ENCODE measurements at regions of chr10 and their contacts with region 1.

Region 1: DNA sequence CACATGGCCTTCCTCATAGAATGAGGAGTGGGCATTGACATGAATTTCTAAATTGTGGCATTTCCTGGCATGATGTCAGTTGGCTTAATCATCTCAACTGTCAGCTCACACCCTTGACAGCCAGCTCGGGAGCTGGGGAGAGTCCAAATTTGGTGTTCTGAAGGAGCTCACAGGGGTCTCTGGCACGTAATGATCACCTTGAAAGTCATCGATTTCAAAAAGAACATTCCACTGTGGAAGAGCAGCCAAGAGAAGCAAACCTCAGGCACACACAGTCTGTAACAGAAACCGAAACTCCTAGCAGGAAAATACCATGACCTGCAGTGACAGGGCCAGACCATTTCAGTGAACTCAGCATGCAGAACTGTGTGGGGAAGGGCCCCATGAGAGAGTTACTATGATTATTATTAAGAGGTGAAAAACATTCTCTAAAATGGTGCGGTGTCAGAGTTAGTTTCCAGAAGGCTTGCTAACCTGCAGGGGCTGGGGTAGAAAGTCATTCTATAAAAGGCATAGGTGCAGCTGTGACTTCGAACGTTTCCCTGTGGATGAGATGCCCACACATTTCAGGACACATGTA is 26.4 kb upstream of the KLF6 start:
- DNase-seq: peak; percentile 49 to 79 (median 66)
- H3K4me3 ChIP-seq: peak overlapping the region; percentile 1 to 39
- H3K4me3 Mint-ChIP-seq: peak overlapping the region; percentile 76 to 87 (median 82)
- H3K27ac ChIP-seq: peak overlapping the region; percentile 99
- H3K27ac Mint-ChIP-seq: no peak overlapping the region
- H3K4me1 ChIP-seq: peaks cover 79% of the 10 kb centered on the region
- H3K4me1 Mint-ChIP-seq: peaks cover 18 to 89% (median 66%) of the 10 kb centered on the region in 4 donors
- H3K27me3 ChIP-seq: no peaks in the 10 kb centered on the region
- H3K27me3 Mint-ChIP-seq: no peaks in the 10 kb centered on the region

Region 2: DNA sequence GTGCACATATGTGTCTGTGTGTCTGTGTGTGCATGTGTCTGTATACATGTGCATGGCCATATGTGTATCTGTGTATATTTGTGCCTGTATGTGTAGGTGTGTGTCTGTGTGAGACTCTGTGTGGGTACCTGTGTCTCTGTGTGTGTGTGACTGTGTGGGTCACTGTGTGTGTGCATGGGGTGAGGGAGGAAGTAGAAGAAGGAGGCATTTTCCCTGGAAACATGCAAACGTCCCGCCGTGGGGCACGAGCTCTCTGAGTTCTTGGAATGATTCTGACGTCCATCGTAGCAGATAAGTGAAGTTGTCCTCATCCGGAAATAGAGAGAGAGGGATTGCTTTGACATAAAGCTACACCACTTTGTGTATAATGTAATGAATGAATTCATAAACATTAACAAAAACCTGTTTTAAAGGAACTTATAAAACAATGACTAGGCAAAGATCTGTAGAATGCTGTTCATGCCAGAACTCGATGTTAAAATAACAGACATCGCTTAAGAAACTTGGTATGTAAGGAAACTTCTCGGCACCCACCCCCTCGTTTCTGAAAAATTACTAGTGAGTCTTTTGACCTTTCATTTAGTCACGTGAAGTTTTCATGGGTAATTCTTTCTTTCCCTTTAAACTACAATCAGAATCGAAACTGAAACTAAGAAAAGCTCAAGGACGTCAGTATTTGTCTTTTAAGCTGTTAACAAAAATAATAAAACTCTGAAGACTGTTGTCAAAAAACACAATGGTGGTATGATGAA is 17.2 kb after region 1 on chr10:
- CTCF ChIA-PET with region 1: interaction called, 7 read pairs
- POLR2A ChIA-PET with region 1: interaction called, 304 read pairs
- intact Hi-C with region 1: loop called (anchors 2 kb)
- DNase-seq: peak; percentile 53 to 70 (median 62)
- H3K4me3 ChIP-seq: peak overlapping the region; percentile 32 to 55
- H3K4me3 Mint-ChIP-seq: peak overlapping the region; percentile 85 to 91 (median 88)
- H3K27ac ChIP-seq: peak overlapping the region; percentile 78
- H3K27ac Mint-ChIP-seq: peak overlapping the region; percentile 84 to 98 (median 95)
- H3K4me1 ChIP-seq: peaks cover 21% of the 10 kb centered on the region
- H3K4me1 Mint-ChIP-seq: peaks cover 21 to 43% (median 33%) of the 10 kb centered on the region in 4 donors
- H3K27me3 ChIP-seq: no peaks in the 10 kb centered on the region
- H3K27me3 Mint-ChIP-seq: no peaks in the 10 kb centered on the region

Region 3: GRCh38 chr10:3887885-3888476 is 76.6 kb after region 1 on chr10:
- CTCF ChIA-PET with region 1: interaction called, 3 read pairs
- POLR2A ChIA-PET with region 1: interaction called, 25 read pairs
- intact Hi-C with region 1: no loop called
- DNase-seq: peak; percentile 70 to 94 (median 74)
- H3K4me3 ChIP-seq: no peak overlapping the region
- H3K4me3 Mint-ChIP-seq: peak overlapping the region; percentile 62 to 82 (median 70)
- H3K27ac ChIP-seq: peak overlapping the region; percentile 77
- H3K27ac Mint-ChIP-seq: peak overlapping the region; percentile 91 to 99 (median 98)
- H3K4me1 ChIP-seq: peaks cover 53% of the 10 kb centered on the region
- H3K4me1 Mint-ChIP-seq: peaks cover 23 to 68% (median 49%) of the 10 kb centered on the region in 4 donors
- H3K27me3 ChIP-seq: no peaks in the 10 kb centered on the region
- H3K27me3 Mint-ChIP-seq: no peaks in the 10 kb centered on the region

Region 4: DNA sequence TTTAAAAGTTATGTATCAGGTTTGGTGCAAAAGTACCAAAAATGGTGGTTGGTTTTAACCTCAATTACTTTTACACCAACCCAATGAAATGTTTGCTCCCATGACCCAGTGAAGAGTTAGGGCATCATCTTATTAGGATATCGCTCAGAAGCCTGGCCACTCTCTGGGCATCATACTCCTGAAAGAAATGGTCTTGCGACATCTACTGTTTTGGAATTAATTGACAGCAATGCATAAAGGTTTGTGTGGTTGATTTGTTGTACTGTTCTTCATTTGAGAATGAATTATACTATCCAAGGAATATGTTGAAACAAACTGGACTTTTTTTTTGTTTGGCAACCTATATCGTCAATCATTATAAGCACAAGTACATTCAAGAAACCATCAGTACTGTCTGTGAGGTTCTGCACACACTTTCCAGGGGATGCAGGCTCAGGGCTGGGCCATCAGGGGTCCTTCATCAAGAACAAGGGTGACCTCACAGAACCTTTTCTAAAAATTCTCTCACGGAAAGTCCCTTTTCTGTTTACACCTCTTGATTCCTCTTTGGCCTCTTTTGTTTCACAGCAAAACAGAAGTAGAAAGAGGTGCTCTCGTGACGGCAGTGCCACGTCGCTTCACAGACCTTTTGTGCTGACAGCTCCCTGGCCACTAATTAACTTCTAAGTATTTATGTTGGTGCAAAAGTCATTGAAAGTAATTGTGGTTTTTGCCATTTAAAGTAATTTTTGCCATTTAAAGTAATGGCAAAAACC is 90.8 kb after region 1 on chr10:
- CTCF ChIA-PET with region 1: no interaction called
- POLR2A ChIA-PET with region 1: interaction called, 12 read pairs
- intact Hi-C with region 1: no loop called
- DNase-seq: peak; percentile 47 to 81 (median 63)
- H3K4me3 ChIP-seq: no peak overlapping the region
- H3K4me3 Mint-ChIP-seq: peak overlapping the region in 6 of 8 donors; percentile 25 to 72 (median 48)
- H3K27ac ChIP-seq: peak overlapping the region; percentile 42
- H3K27ac Mint-ChIP-seq: peak overlapping the region; percentile 38 to 98 (median 89)
- H3K4me1 ChIP-seq: peaks cover 22% of the 10 kb centered on the region
- H3K4me1 Mint-ChIP-seq: peaks cover 10 to 30% (median 22%) of the 10 kb centered on the region in 4 donors
- H3K27me3 ChIP-seq: no peaks in the 10 kb centered on the region
- H3K27me3 Mint-ChIP-seq: no peaks in the 10 kb centered on the region